PC-9 (cell line): ENCODE measurements at regions of chr2 and their contacts with region 1.

Region 1: GRCh38 chr2:169012812-169013627 is 18.1 kb downstream of the ABCB11 start:
- DNase-seq: no peak
- H3K4me3 ChIP-seq: no peak overlapping the region
- H3K27ac ChIP-seq: peak overlapping the region; percentile 81
- H3K4me1 ChIP-seq: peaks cover 17% of the 10 kb centered on the region
- H3K27me3 ChIP-seq: no peaks in the 10 kb centered on the region
- CTCF ChIP-seq: no peak

Region 2: GRCh38 chr2:169038338-169038757 is 25.3 kb after region 1 on chr2:
- CTCF ChIA-PET with region 1: no interaction called
- POLR2A ChIA-PET with region 1: no interaction called
- intact Hi-C with region 1: loop called (anchors 1 kb)
- DNase-seq: peak; percentile 41 to 92
- H3K4me3 ChIP-seq: no peak overlapping the region
- H3K27ac ChIP-seq: peak overlapping the region; percentile 87
- H3K4me1 ChIP-seq: peaks cover 36% of the 10 kb centered on the region
- H3K27me3 ChIP-seq: no peaks in the 10 kb centered on the region
- CTCF ChIP-seq: no peak

Region 3: DNA sequence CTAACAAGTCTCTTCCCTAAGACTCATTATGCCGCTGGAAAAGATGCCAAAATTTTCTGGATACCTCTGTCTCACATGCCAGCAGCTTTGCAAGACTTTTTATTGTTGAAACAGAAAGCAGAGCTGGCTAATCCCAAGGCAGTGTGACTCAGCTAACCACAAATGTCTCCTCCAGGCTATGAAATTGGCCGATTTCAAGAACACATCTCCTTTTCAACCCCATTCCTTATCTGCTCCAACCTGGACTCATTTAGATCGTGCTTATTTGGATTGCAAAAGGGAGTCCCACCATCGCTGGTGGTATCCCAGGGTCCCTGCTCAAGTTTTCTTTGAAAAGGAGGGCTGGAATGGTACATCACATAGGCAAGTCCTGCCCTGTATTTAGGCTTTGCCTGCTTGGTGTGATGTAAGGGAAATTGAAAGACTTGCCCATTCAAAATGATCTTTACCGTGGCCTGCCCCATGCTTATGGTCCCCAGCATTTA is 82.6 kb after region 1 on chr2:
- CTCF ChIA-PET with region 1: no interaction called
- POLR2A ChIA-PET with region 1: no interaction called
- intact Hi-C with region 1: loop called (anchors 5 kb)
- DNase-seq: peak; percentile 50 to 92
- H3K4me3 ChIP-seq: peak overlapping the region; percentile 37; the same call in 1 of the 2 replicates
- H3K27ac ChIP-seq: peak overlapping the region; percentile 55
- H3K4me1 ChIP-seq: peaks cover 55% of the 10 kb centered on the region
- H3K27me3 ChIP-seq: no peaks in the 10 kb centered on the region
- CTCF ChIP-seq: no peak